Breast epithelium (tissue), 4 donors: ENCODE measurements at regions of chr7 and their contacts with region 1.

Region 1: GRCh38 chr7:24757353-24758275 is at the start of gene GSDME:
- DNase-seq: no peak
- H3K4me3 ChIP-seq: peak within 1 kb of the TSS; percentile 64 to 77 (median 74)
- H3K27ac ChIP-seq: peak within 1 kb of the TSS; percentile 79 to 85
- H3K4me1 ChIP-seq: no peaks in the 10 kb centered on the region
- H3K27me3 ChIP-seq: no peaks in the 10 kb centered on the region
- CTCF ChIP-seq: no peak
- POLR2A ChIP-seq: no peak
- total RNA-seq, gene GSDME: 12.3 to 33.5 (median 15.1) TPM

Region 2: GRCh38 chr7:22949944-22950343 is 1807.7 kb before region 1 on chr7:
- intact Hi-C with region 1: loop called (anchors 10 kb)
- DNase-seq: no peak
- H3K4me3 ChIP-seq: no peak overlapping the region
- H3K27ac ChIP-seq: no peak overlapping the region
- H3K4me1 ChIP-seq: no peaks in the 10 kb centered on the region
- H3K27me3 ChIP-seq: no peaks in the 10 kb centered on the region
- CTCF ChIP-seq: no peak
- POLR2A ChIP-seq: no peak

Region 3: DNA sequence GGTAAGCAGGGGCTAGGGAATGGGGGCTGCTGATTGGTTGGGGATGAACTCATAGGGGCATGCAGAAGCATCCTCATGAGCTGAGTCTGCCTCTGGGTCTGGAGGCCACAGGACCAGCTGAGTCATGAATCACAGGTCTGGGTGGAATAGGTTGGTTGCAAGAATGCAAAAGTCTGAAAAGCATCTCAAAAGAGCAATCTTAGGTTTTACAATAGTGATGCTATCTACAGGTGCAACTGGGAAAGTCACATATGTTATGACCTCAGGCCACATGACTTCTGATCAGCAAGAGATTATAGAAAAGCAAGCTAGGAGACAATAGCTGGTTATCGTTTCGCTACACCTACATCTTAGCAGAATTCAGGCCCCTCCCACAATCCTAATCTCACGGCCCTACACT is 241.7 kb before region 1 on chr7:
- intact Hi-C with region 1: no loop called
- DNase-seq: no peak
- H3K4me3 ChIP-seq: no peak overlapping the region
- H3K27ac ChIP-seq: no peak overlapping the region
- H3K4me1 ChIP-seq: no peaks in the 10 kb centered on the region
- H3K27me3 ChIP-seq: no peaks in the 10 kb centered on the region
- CTCF ChIP-seq: no peak
- POLR2A ChIP-seq: no peak

Region 4: GRCh38 chr7:24786941-24787340 is 29.3 kb after region 1 on chr7:
- intact Hi-C with region 1: no loop called
- DNase-seq: peak in 1 of 2 donors; percentile 27
- H3K4me3 ChIP-seq: no peak overlapping the region
- H3K27ac ChIP-seq: no peak overlapping the region
- H3K4me1 ChIP-seq: no peaks in the 10 kb centered on the region
- H3K27me3 ChIP-seq: no peaks in the 10 kb centered on the region
- CTCF ChIP-seq: no peak
- POLR2A ChIP-seq: no peak

Region 5: GRCh38 chr7:26439521-26440232 is 1682.1 kb after region 1 on chr7:
- intact Hi-C with region 1: loop called (anchors 10 kb)
- DNase-seq: no peak
- H3K4me3 ChIP-seq: no peak overlapping the region
- H3K27ac ChIP-seq: no peak overlapping the region
- H3K4me1 ChIP-seq: no peaks in the 10 kb centered on the region
- H3K27me3 ChIP-seq: no peaks in the 10 kb centered on the region
- CTCF ChIP-seq: no peak
- POLR2A ChIP-seq: no peak